Caco-2 (cell line): ENCODE measurements at regions of chr7 and their contacts with region 1.

Region 1: DNA sequence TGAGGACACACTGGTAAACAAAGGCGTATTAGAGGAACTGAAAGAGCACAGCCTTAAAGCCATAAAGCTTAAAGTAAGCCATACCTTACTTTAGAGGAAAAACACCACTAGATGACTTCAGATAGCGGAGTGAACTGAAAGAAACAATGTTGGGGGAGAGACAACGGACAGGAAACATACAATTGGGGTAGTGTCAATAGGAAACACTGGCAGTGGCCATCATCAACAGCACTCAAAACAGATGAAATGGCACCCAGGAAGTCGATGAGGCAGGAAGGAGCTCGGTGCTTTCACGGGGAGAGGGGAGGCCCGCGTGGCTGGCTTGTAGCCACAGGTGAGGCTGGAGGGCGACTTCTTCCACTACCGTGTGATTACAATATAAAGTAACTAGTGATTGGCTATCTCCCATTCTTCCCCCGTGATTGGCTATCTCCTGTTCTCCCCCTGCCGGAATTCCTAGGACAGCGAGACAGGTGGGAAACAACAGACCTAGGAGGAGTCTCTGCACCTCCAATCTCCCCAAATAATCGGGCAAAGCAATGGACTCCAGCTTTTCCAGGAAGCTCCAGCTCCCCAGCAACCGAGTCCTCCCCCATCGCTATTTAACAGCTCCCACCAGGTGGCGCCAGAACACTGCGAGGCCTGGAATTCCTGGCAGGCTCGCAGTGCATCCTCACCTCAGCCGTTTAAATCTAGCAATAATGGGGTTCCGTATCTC is 2.4 kb upstream of the TAS2R38 start:
- DNase-seq: peak; percentile 85 to 90
- H3K4me3 ChIP-seq: peak overlapping the region; percentile 18; the same call in 1 of the 2 replicates
- H3K4me3 Mint-ChIP-seq: peak overlapping the region; percentile 59
- H3K27ac Mint-ChIP-seq: peak overlapping the region; percentile 42
- H3K4me1 ChIP-seq: no peaks in the 10 kb centered on the region
- H3K4me1 Mint-ChIP-seq: peaks cover 6% of the 10 kb centered on the region
- H3K27me3 ChIP-seq: no peaks in the 10 kb centered on the region
- H3K27me3 Mint-ChIP-seq: no peaks in the 10 kb centered on the region
- CTCF ChIP-seq: peak; percentile 89 to 93

Region 2: DNA sequence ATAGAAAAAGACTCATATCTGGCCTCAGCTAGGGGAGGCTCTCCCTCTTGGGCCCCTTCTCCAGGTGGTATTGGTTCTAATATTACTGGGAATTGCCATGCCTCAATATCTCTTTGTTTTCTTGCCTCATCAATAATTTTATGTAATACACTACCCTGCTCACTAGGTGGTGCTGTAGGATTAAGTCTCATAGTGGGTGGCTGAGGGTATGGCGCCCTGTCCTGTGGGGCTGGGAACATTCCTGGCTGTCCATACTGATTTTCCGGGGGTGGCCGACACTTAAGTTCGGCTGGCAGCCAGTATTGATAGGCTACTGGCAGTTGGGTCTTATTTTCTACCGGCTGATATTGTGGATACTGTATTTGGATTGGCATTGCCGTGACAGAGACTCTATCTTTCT is 221.0 kb before region 1 on chr7:
- CTCF ChIA-PET with region 1: no interaction called
- POLR2A ChIA-PET with region 1: no interaction called
- intact Hi-C with region 1: no loop called
- DNase-seq: peak in 1 of 2 experiments; percentile 58
- H3K4me3 ChIP-seq: no peak overlapping the region
- H3K4me3 Mint-ChIP-seq: no peak overlapping the region
- H3K27ac Mint-ChIP-seq: no peak overlapping the region
- H3K4me1 ChIP-seq: no peaks in the 10 kb centered on the region
- H3K4me1 Mint-ChIP-seq: no peaks in the 10 kb centered on the region
- H3K27me3 ChIP-seq: no peaks in the 10 kb centered on the region
- H3K27me3 Mint-ChIP-seq: no peaks in the 10 kb centered on the region
- CTCF ChIP-seq: peak; percentile 45 to 68

Region 3: DNA sequence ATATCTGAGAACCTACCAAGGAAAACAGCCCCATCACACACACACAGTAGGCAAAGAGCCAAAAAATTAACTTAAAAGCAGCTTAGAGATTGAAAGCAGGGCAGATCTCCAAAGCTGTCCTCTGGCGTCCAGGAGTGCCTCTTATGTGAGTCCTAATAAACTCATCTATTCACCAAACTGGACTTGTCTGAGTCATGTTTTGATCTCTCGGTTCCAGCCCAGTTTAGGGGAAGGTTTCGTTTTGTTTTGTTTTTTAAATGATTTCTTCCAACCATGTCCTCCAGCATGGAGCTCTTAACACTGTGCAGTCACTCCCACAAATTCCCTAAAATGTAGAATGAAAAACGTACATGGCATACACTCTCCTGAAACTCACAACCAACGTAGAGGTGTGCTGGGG is 128.0 kb before region 1 on chr7:
- CTCF ChIA-PET with region 1: no interaction called
- POLR2A ChIA-PET with region 1: no interaction called
- intact Hi-C with region 1: no loop called
- DNase-seq: no peak
- H3K4me3 ChIP-seq: no peak overlapping the region
- H3K4me3 Mint-ChIP-seq: no peak overlapping the region
- H3K27ac Mint-ChIP-seq: no peak overlapping the region
- H3K4me1 ChIP-seq: no peaks in the 10 kb centered on the region
- H3K4me1 Mint-ChIP-seq: no peaks in the 10 kb centered on the region
- H3K27me3 ChIP-seq: no peaks in the 10 kb centered on the region
- H3K27me3 Mint-ChIP-seq: no peaks in the 10 kb centered on the region
- CTCF ChIP-seq: no peak

Region 4: DNA sequence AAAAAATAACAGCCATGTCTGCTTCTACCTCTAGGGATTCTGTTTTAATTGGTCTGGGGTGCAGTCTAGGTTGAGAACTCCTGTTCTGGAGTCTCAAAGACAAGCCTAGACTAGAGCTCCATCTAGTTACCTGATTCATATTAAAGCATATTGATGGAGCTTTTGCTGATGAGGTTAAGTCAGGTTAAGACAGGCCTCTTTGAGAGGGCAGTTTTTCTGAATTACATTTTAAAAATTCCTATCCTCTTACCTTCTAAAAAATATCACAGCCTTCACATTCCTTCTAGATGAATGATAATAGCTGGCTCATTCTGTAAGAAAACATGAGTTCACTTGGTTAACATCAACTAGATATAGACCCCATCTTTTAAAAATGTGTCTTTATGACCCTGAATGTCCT is 48.6 kb after region 1 on chr7:
- CTCF ChIA-PET with region 1: interaction called, 13 read pairs
- POLR2A ChIA-PET with region 1: no interaction called
- intact Hi-C with region 1: loop called (anchors 1 kb)
- DNase-seq: no peak
- H3K4me3 ChIP-seq: no peak overlapping the region
- H3K4me3 Mint-ChIP-seq: no peak overlapping the region
- H3K27ac Mint-ChIP-seq: no peak overlapping the region
- H3K4me1 ChIP-seq: peaks cover 6% of the 10 kb centered on the region; the same call in 1 of the 2 replicates
- H3K4me1 Mint-ChIP-seq: peaks cover 7% of the 10 kb centered on the region
- H3K27me3 ChIP-seq: no peaks in the 10 kb centered on the region
- H3K27me3 Mint-ChIP-seq: no peaks in the 10 kb centered on the region
- CTCF ChIP-seq: no peak

Region 5: DNA sequence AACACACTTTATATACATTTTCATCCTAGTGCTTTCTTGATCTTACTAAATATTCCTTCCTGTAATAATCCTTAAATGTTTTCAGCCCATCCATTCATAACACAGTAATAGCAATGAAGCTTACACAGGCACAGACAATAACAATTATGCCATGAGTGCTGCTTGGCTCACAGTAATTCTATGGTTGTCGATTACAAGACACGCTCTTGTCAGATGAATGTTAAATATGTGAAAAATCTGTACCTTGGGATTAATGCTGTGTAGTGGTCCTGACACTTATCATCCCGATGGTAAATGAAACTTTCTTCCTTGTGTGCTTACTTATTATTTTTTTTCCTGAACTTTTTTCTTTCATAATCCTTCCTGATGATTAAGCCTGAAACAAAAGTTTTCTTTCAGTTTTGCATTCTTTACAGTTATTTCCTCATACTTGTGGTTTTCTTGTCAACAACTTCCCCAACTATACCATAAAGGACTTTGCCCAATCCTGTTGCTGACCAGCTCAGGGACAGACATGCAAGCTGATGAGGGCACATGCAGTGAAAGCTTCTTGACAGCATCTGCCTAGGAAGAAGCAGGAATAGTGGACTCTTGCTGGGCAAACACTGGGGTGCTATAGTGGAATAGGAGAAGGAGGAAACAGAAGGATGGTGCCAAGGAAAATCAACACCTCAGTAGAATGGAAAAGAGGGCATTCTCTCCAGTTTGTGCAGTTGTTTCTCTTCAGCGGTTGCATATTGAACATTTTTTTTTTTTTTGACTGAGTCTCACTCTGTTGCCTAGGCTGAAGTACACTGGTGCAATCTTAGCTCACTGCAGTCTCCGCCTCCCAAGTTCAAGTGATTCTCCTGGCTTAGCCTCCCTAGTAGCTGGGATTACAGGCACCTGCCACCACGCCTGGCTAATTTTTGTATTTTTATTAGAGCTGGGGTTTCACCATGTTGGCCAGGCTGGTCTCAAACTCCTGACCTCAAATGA is 128.9 kb after region 1 on chr7:
- CTCF ChIA-PET with region 1: interaction called, 4 read pairs
- POLR2A ChIA-PET with region 1: no interaction called
- intact Hi-C with region 1: loop called (anchors 5 kb)
- DNase-seq: peak; percentile 73 to 86
- H3K4me3 ChIP-seq: no peak overlapping the region
- H3K4me3 Mint-ChIP-seq: peak overlapping the region; percentile 57
- H3K27ac Mint-ChIP-seq: peak overlapping the region; percentile 92
- H3K4me1 ChIP-seq: peaks cover 45% of the 10 kb centered on the region
- H3K4me1 Mint-ChIP-seq: peaks cover 39% of the 10 kb centered on the region
- H3K27me3 ChIP-seq: no peaks in the 10 kb centered on the region
- H3K27me3 Mint-ChIP-seq: no peaks in the 10 kb centered on the region
- CTCF ChIP-seq: no peak

Region 6: DNA sequence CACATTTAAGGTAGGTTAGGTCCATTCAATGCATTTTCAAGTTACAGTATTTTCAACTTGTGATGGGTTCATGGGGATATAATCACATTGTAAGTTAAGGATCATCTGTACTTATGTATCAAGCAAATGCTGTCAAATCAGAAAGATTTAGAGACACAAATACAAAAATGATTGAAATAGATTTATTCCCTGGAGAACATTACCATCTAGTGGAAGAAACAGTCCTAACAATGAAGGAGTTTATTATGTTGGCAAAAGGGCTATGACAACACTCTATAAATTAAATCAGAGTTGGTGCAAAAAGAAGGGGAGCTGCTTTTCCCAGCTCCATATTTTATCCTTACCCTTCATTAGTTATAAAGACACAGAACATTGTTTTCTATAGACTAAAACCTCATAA is 212.9 kb after region 1 on chr7:
- CTCF ChIA-PET with region 1: interaction called, 13 read pairs
- POLR2A ChIA-PET with region 1: interaction called, 3 read pairs
- intact Hi-C with region 1: loop called (anchors 1 kb)
- DNase-seq: peak in 1 of 2 experiments; percentile 19
- H3K4me3 ChIP-seq: no peak overlapping the region
- H3K4me3 Mint-ChIP-seq: no peak overlapping the region
- H3K27ac Mint-ChIP-seq: no peak overlapping the region
- H3K4me1 ChIP-seq: no peaks in the 10 kb centered on the region
- H3K4me1 Mint-ChIP-seq: peaks cover 6% of the 10 kb centered on the region
- H3K27me3 ChIP-seq: no peaks in the 10 kb centered on the region
- H3K27me3 Mint-ChIP-seq: no peaks in the 10 kb centered on the region
- CTCF ChIP-seq: peak; percentile 40 to 56